ENCODE measurements at regions of chr14 and their contacts with region 1.

Region 1: GRCh38 chr14:20376071-20376588 is 32.7 kb downstream of the PARP2 start:
- DNase-seq: peak; percentile 67
- ATAC-seq: peak; percentile 99
- H3K4me3 ChIP-seq: peak overlapping the region in 2 of 3 experiments; percentile 3 to 17; a peak in 2 of 6 replicates
- H3K27ac ChIP-seq: peak overlapping the region; percentile 71
- H3K4me1 ChIP-seq: peaks cover 19% of the 10 kb centered on the region
- H3K27me3 ChIP-seq: no peaks in the 10 kb centered on the region
- CTCF ChIP-seq: no peak
- EP300 ChIP-seq: no peak
- POLR2A ChIP-seq: peak in 1 of 2 experiments; percentile 58; a peak in 2 of 4 replicates
- RAD21 ChIP-seq: no peak

Region 2: DNA sequence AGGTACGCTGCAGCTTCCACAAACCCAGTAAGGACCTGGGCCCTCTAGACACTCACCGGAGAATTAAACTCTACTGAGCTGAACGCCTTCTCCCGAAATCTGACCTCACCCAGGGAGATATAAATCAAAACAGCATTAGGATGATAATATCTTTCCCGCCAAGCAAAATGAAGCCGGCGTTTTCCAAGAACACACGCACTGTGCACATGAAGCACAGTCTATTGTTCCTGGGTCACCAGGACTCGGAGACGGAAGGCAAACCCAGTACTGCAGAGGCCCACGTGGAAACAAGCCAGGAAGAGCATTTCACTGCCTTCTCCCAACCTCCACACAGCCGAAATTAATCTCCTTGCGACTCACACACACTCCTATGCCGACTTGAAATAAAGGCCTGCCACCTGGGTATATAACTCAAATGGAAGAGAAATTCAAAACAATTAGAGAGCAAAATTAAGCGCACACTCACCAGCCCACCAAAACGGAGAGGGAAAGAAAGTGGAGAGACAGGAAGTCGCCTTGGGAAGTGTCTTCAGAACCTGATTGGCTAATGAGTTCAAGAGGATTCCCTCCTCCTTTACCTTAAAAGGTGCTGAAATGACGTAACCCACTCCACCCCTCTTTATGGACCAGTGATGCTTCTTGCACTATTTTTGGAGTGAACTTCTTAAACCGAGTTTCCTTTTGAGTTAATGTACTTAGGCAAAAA is 43.2 kb before region 1 on chr14 and contains the start of gene CCNB1IP1:
- CTCF ChIA-PET with region 1: no interaction called
- POLR2A ChIA-PET with region 1: no interaction called
- in situ Hi-C with region 1: no loop called
- intact Hi-C with region 1: loop called (anchors 2 kb)
- DNase-seq: peak; percentile 94
- ATAC-seq: peak; percentile 96
- H3K4me3 ChIP-seq: peak within 1 kb of the TSS; percentile 59 to 78 (median 75)
- H3K27ac ChIP-seq: peak within 1 kb of the TSS; percentile 79
- H3K4me1 ChIP-seq: peaks cover 57% of the 10 kb centered on the region
- H3K27me3 ChIP-seq: no peaks in the 10 kb centered on the region; a peak in 1 of 5 replicates
- CTCF ChIP-seq: no peak
- EP300 ChIP-seq: no peak
- POLR2A ChIP-seq: peak; percentile 78 to 94
- RAD21 ChIP-seq: no peak
- total RNA-seq, gene CCNB1IP1: 98.3 and 110 TPM in 2 replicates